Naive thymus-derived CD4-positive, alpha-beta T cell (primary cell): ENCODE measurements at regions of chr4 and their contacts with region 1.

Region 1: GRCh38 chr4:6673660-6674499 is 19.8 kb upstream of the S100P start:
- DNase-seq: peak; percentile 89 to 97 (median 95)
- ATAC-seq: peak; percentile 93
- H3K4me3 ChIP-seq: peak overlapping the region; percentile 74
- H3K4me3 Mint-ChIP-seq: peak overlapping the region; percentile 90 to 100 (median 98)
- H3K27ac ChIP-seq: peak overlapping the region; percentile 83
- H3K27ac Mint-ChIP-seq: peak overlapping the region; percentile 88 to 100 (median 98)
- H3K4me1 ChIP-seq: peaks cover 30 to 34% of the 10 kb centered on the region in 2 donors
- H3K4me1 Mint-ChIP-seq: peaks cover 33 to 53% (median 50%) of the 10 kb centered on the region in 7 donors
- H3K27me3 ChIP-seq: no peaks in the 10 kb centered on the region
- H3K27me3 Mint-ChIP-seq: peaks cover 0 to 3% (median 0%) of the 10 kb centered on the region in 5 donors

Region 2: GRCh38 chr4:4941741-4942140 is 1732.1 kb before region 1 on chr4:
- CTCF ChIA-PET with region 1: no interaction called
- POLR2A ChIA-PET with region 1: no interaction called
- intact Hi-C with region 1: no loop called
- DNase-seq: no peak
- ATAC-seq: no peak
- H3K4me3 ChIP-seq: no peak overlapping the region
- H3K4me3 Mint-ChIP-seq: no peak overlapping the region
- H3K27ac ChIP-seq: no peak overlapping the region
- H3K27ac Mint-ChIP-seq: no peak overlapping the region
- H3K4me1 ChIP-seq: peaks cover 8 to 9% of the 10 kb centered on the region in 2 donors
- H3K4me1 Mint-ChIP-seq: peaks cover 5 to 20% (median 19%) of the 10 kb centered on the region in 7 donors
- H3K27me3 ChIP-seq: no peaks in the 10 kb centered on the region
- H3K27me3 Mint-ChIP-seq: peaks cover 0 to 9% (median 0%) of the 10 kb centered on the region in 5 donors

Region 3: DNA sequence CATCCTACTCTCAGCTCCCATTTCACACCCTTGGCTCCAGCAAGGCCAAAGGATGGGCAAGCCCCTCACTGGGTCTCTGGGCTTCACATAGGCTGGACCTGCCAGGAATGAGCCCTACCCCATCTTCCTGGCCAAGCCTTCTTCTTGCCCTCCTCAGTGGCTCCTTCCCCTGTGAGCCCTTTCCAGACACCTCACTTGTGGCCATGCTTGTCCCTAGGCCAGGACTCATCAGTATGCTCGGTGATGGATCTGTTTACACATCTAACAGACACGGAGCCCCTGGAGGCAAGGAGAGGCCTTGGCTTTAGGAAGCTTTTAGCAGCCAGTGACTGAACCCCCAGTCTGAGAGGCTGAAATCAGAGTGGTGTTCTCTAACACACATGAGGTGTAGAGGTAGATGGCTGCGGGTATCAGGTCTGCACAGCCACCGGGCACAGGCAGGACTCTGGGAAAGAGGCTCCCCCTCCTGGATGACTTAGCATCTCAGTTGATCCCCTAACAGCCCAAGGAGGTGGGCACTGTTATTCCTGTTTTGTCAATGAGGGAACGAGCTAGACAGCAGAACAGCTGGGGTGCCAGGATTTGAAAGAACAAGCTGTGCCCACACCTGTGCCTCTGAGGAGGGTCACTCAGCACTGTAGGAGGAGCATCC is 246.3 kb before region 1 on chr4:
- CTCF ChIA-PET with region 1: no interaction called
- POLR2A ChIA-PET with region 1: no interaction called
- intact Hi-C with region 1: no loop called
- DNase-seq: no peak
- ATAC-seq: no peak
- H3K4me3 ChIP-seq: no peak overlapping the region
- H3K4me3 Mint-ChIP-seq: no peak overlapping the region
- H3K27ac ChIP-seq: no peak overlapping the region
- H3K27ac Mint-ChIP-seq: no peak overlapping the region
- H3K4me1 ChIP-seq: no peaks in the 10 kb centered on the region
- H3K4me1 Mint-ChIP-seq: no peaks in the 10 kb centered on the region
- H3K27me3 ChIP-seq: no peaks in the 10 kb centered on the region
- H3K27me3 Mint-ChIP-seq: peaks cover 0 to 27% (median 15%) of the 10 kb centered on the region in 5 donors

Region 4: DNA sequence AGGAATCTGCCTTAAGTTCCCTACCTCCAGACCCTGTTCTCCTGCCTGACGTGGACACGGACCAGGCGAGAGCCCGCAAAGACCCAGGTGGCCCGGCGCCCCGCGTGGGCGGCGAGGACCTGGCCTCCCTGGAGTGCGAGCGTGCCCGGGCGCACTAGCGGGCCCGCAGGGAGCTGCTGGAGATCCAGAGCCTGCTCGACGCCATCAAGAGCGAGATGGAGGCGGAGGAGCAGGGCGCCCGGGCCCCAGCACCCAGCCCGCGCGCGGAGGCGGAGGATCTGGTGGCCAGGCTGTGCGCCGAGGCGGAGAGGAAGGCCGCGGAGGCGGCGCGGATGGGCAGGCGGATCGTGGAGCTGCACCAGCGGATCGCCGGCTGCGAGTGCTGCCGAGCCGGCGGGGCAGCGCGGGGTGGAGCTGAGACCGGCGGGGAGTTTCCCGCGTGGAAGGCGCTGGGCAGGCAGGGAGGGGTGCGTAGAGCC is 15.2 kb before region 1 on chr4:
- CTCF ChIA-PET with region 1: interaction called, 15 read pairs
- POLR2A ChIA-PET with region 1: interaction called, 55 read pairs
- intact Hi-C with region 1: no loop called
- DNase-seq: peak; percentile 47 to 61 (median 55)
- ATAC-seq: peak; percentile 96
- H3K4me3 ChIP-seq: peak overlapping the region; percentile 51
- H3K4me3 Mint-ChIP-seq: peak overlapping the region; percentile 60 to 81 (median 76)
- H3K27ac ChIP-seq: peak overlapping the region; percentile 22
- H3K27ac Mint-ChIP-seq: peak overlapping the region in 6 of 9 donors; percentile 11 to 76 (median 44)
- H3K4me1 ChIP-seq: peaks cover 4 to 5% of the 10 kb centered on the region in 2 donors
- H3K4me1 Mint-ChIP-seq: peaks cover 0 to 15% (median 10%) of the 10 kb centered on the region in 7 donors
- H3K27me3 ChIP-seq: peaks cover 0 to 2% of the 10 kb centered on the region in 2 donors
- H3K27me3 Mint-ChIP-seq: peaks cover 0 to 43% (median 0%) of the 10 kb centered on the region in 5 donors

Region 5: DNA sequence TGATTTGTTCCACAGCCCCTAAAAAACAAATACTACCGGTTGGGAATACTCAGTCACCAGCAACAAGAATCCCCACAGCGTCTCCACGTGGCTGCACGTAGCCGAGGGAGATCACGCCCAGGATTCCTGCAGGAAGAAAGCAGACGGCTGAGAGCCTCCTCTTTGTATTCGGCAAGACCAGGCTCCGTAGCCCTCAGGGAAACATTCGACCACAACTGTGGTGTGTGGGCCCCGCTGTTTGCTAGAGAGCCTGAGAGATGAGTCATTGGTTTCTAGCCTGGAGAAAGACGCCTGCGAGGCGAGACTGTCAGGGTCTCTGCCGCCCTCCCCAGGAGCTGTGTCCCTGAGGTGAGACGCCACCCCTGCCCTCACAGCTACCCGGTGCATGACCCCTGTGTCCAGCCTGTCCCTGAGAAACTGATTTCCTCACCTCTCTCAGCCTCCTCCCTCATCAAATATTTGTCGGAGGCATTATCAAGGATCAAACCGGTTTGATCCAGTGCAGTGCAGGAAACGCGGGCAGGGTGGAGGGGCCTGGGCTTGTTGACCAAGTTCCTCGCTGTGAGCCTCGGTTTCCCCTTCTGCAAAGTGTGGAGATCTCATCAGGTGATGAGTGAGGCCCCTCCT is 15.1 kb after region 1 on chr4:
- CTCF ChIA-PET with region 1: interaction called, 61 read pairs
- POLR2A ChIA-PET with region 1: interaction called, 406 read pairs
- intact Hi-C with region 1: loop called (anchors 1 kb)
- DNase-seq: peak in 3 of 9 donors; percentile 18 to 79 (median 62)
- ATAC-seq: peak; percentile 79
- H3K4me3 ChIP-seq: peak overlapping the region; percentile 43
- H3K4me3 Mint-ChIP-seq: peak overlapping the region in 9 of 10 donors; percentile 16 to 92 (median 66)
- H3K27ac ChIP-seq: peak overlapping the region; percentile 61
- H3K27ac Mint-ChIP-seq: peak overlapping the region; percentile 93 to 99 (median 96)
- H3K4me1 ChIP-seq: peaks cover 53 to 66% of the 10 kb centered on the region in 2 donors
- H3K4me1 Mint-ChIP-seq: peaks cover 38 to 82% (median 64%) of the 10 kb centered on the region in 7 donors
- H3K27me3 ChIP-seq: no peaks in the 10 kb centered on the region
- H3K27me3 Mint-ChIP-seq: no peaks in the 10 kb centered on the region

Region 6: GRCh38 chr4:6701371-6701770 is 27.5 kb after region 1 on chr4:
- CTCF ChIA-PET with region 1: interaction called, 50 read pairs
- POLR2A ChIA-PET with region 1: interaction called, 696 read pairs
- intact Hi-C with region 1: loop called (anchors 1 kb)
- DNase-seq: peak in 1 of 9 donors; percentile 18
- ATAC-seq: no peak
- H3K4me3 ChIP-seq: no peak overlapping the region
- H3K4me3 Mint-ChIP-seq: no peak overlapping the region
- H3K27ac ChIP-seq: no peak overlapping the region
- H3K27ac Mint-ChIP-seq: peak overlapping the region in 1 of 9 donors; percentile 12
- H3K4me1 ChIP-seq: peaks cover 41 to 60% of the 10 kb centered on the region in 2 donors
- H3K4me1 Mint-ChIP-seq: peaks cover 38 to 73% (median 68%) of the 10 kb centered on the region in 7 donors
- H3K27me3 ChIP-seq: no peaks in the 10 kb centered on the region
- H3K27me3 Mint-ChIP-seq: no peaks in the 10 kb centered on the region

Region 7: DNA sequence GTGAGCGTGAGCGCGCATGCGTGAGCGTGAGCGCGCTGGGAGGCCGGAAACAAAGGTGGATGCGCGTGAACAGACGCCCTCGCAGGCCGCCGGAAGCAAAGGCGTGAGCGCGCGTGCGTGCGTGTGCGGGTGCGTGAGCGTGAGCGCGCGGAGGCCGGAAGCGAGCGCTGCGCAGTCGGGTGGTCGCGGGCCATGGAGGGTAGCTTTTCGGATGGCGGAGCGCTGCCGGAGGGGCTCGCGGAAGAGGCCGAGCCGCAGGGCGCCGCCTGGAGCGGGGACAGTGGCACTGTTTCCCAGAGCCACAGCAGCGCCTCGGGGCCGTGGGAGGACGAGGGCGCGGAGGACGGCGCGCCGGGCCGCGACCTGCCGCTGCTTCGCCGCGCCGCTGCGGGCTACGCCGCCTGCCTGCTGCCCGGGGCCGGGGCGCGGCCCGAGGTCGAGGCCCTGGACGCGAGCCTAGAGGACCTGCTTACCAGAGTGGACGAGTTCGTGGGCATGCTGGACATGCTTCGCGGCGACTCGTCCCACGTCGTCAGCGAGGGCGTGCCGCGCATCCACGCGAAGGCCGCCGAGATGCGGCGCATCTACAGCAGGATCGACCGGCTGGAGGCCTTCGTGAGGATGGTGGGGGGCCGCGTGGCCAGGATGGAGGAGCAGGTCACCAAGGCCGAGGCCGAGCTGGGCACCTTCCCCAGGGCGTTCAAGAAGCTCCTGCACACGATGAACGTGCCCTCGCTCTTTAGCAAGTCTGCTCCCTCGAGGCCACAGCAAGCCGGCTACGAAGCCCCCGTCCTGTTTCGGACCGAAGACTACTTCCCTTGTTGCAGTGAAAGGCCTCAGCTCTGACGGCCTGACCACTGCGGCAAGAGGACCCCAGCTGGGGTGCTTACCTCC is 42.4 kb after region 1 on chr4 and contains the start of gene BLOC1S4:
- CTCF ChIA-PET with region 1: interaction called, 61 read pairs
- POLR2A ChIA-PET with region 1: interaction called, 696 read pairs
- intact Hi-C with region 1: loop called (anchors 1 kb)
- DNase-seq: peak; percentile 86 to 95 (median 91)
- ATAC-seq: peak; percentile 92
- H3K4me3 ChIP-seq: peak within 1 kb of the TSS; percentile 86
- H3K4me3 Mint-ChIP-seq: peak within 1 kb of the TSS; percentile 89 to 99 (median 95)
- H3K27ac ChIP-seq: peak within 1 kb of the TSS; percentile 90
- H3K27ac Mint-ChIP-seq: peak within 1 kb of the TSS; percentile 94 to 100 (median 97)
- H3K4me1 ChIP-seq: peaks cover 19 to 20% of the 10 kb centered on the region in 2 donors
- H3K4me1 Mint-ChIP-seq: peaks cover 22 to 52% (median 36%) of the 10 kb centered on the region in 7 donors
- H3K27me3 ChIP-seq: no peaks in the 10 kb centered on the region
- H3K27me3 Mint-ChIP-seq: peaks cover 0 to 8% (median 0%) of the 10 kb centered on the region in 5 donors
- total RNA-seq, gene BLOC1S4: 18.7 to 45.9 (median 25.0) TPM

Region 8: DNA sequence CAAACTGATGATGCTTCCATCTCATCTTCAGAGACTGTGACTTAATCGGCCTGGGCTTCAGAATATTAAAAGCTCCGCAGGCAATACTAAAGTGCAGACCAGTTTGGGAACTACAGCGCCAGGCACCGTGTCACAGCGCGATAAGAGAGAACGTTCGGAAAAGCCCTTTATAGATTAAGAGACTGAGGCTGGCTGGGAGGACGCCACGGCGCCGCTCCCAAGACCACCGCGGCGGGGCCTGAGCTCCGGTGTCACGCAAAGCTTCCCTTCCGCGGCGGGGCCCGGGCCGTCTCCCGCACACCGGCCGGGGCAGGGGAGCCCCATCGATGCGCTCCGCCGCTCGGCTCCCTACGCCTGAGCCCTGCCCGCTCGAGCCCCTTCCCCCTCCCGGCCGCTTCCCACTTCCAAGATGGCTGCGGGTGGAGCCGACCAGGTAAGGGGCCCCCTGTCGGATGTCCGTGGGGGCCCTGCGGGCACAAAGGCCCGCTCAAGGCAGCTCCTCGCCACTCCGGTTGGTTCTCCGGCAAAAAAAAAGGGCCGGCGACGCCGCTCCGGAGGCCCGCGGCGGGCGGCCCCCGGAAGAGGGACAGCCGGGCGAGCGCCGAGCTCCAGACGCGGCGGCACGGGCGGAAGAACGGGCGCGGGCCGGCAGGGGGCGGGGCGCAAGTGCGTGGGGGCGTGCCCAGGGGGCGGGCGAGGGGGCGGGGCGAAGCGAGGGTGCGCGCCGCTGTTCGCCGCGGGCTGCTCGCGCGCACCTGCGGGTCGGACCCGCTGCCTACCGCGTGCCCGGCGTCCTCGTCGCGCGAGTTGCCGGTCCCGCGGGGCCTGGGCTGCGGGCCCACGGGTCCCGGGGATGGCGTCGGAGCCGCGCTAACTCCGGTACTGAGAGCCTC is 235.4 kb after region 1 on chr4 and contains the start of gene TBC1D14:
- CTCF ChIA-PET with region 1: no interaction called
- POLR2A ChIA-PET with region 1: interaction called, 4 read pairs
- intact Hi-C with region 1: loop called in 1 of 2 experiments (anchors 1 kb)
- DNase-seq: peak; percentile 84 to 93 (median 90)
- ATAC-seq: peak; percentile 94
- H3K4me3 ChIP-seq: peak within 1 kb of the TSS; percentile 70
- H3K4me3 Mint-ChIP-seq: peak within 1 kb of the TSS; percentile 89 to 95 (median 91)
- H3K27ac ChIP-seq: peak within 1 kb of the TSS; percentile 97
- H3K27ac Mint-ChIP-seq: peak within 1 kb of the TSS; percentile 81 to 94 (median 91)
- H3K4me1 ChIP-seq: peaks cover 20 to 38% of the 10 kb centered on the region in 2 donors
- H3K4me1 Mint-ChIP-seq: peaks cover 45 to 60% (median 55%) of the 10 kb centered on the region in 7 donors
- H3K27me3 ChIP-seq: no peaks in the 10 kb centered on the region
- H3K27me3 Mint-ChIP-seq: peaks cover 0 to 2% (median 0%) of the 10 kb centered on the region in 5 donors
- total RNA-seq, gene TBC1D14: 42.9 to 72.2 (median 58.3) TPM

Region 9: DNA sequence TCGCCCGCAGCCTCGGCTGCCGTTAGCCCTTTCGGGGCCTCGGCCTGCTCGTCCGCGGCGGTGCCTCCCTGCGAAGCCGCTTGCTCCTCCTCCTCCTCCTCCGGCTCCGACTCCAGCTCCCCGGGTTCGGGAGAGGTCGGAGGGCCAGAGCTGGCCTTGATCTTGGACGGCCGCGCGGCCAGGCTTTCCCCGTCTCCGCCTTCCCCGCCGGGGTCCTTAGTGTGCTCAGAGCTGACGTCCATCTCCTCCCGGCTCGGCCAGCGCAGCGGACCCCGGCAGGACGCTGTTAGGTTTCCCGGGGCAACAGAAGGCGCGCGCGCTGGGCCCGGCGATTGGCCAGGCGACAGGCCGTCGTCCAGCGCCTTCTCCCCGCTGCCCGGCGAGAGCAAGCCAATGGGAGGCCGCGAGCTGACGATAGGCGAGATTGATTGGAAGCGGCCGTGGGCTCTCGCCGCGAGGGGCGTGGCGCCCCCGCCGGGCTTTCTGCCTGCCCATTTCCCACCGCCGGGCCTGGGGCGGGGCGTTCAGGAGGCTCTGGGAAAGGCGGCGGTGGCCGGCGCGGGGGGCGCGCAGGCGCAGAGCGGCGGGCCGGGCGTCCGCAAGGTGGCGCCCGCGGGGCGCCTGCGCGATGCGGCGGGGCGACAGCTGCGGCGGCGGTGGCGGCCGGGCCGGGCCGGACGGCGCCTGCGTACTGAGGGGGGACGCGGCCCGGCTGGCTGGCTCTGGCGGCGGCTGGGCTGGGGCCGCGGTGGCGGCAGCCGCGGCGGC is 369.0 kb after region 1 on chr4 and contains the start of gene TADA2B:
- CTCF ChIA-PET with region 1: no interaction called
- POLR2A ChIA-PET with region 1: interaction called, 5 read pairs
- intact Hi-C with region 1: loop called in 1 of 2 experiments (anchors 1 kb)
- DNase-seq: peak; percentile 79 to 99 (median 88)
- ATAC-seq: peak; percentile 89
- H3K4me3 ChIP-seq: peak within 1 kb of the TSS; percentile 84
- H3K4me3 Mint-ChIP-seq: peak within 1 kb of the TSS; percentile 90 to 95 (median 92)
- H3K27ac ChIP-seq: peak within 1 kb of the TSS; percentile 85
- H3K27ac Mint-ChIP-seq: peak within 1 kb of the TSS; percentile 80 to 92 (median 89)
- H3K4me1 ChIP-seq: peaks cover 33 to 40% of the 10 kb centered on the region in 2 donors
- H3K4me1 Mint-ChIP-seq: peaks cover 38 to 58% (median 52%) of the 10 kb centered on the region in 7 donors
- H3K27me3 ChIP-seq: no peaks in the 10 kb centered on the region
- H3K27me3 Mint-ChIP-seq: peaks cover 0 to 15% (median 0%) of the 10 kb centered on the region in 5 donors
- total RNA-seq, gene TADA2B: 26.8 to 49.0 (median 41.5) TPM

Region 10: GRCh38 chr4:7792616-7793015 is 1118.7 kb after region 1 on chr4:
- CTCF ChIA-PET with region 1: no interaction called
- POLR2A ChIA-PET with region 1: no interaction called
- intact Hi-C with region 1: no loop called
- DNase-seq: no peak
- ATAC-seq: no peak
- H3K4me3 ChIP-seq: no peak overlapping the region
- H3K4me3 Mint-ChIP-seq: no peak overlapping the region
- H3K27ac ChIP-seq: no peak overlapping the region
- H3K27ac Mint-ChIP-seq: peak overlapping the region in 1 of 9 donors; percentile 12
- H3K4me1 ChIP-seq: no peaks in the 10 kb centered on the region
- H3K4me1 Mint-ChIP-seq: no peaks in the 10 kb centered on the region
- H3K27me3 ChIP-seq: no peaks in the 10 kb centered on the region
- H3K27me3 Mint-ChIP-seq: no peaks in the 10 kb centered on the region

Region 11: DNA sequence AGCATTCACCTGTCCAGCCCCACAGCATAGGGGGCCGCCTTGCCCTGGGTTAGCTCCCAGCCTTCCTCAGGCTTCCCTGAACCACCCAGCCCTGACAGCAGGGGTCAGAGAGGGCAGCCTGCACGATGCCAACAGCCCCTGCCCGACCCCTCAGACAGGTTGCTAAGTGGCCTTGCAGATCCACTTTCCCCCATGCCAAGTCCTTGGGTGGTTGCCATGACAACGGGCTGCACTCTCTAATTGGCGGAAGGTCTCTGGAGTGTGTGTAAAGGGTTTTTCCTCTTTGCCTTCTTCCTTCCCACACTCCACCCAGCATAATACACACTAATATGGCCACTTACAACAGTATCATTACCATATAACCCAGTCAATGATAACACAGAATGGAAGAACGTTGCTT is 1365.4 kb after region 1 on chr4:
- CTCF ChIA-PET with region 1: no interaction called
- POLR2A ChIA-PET with region 1: no interaction called
- intact Hi-C with region 1: no loop called
- DNase-seq: no peak
- ATAC-seq: no peak
- H3K4me3 ChIP-seq: no peak overlapping the region
- H3K4me3 Mint-ChIP-seq: no peak overlapping the region
- H3K27ac ChIP-seq: no peak overlapping the region
- H3K27ac Mint-ChIP-seq: no peak overlapping the region
- H3K4me1 ChIP-seq: peaks cover 6 to 10% of the 10 kb centered on the region in 2 donors
- H3K4me1 Mint-ChIP-seq: peaks cover 5 to 11% (median 10%) of the 10 kb centered on the region in 7 donors
- H3K27me3 ChIP-seq: no peaks in the 10 kb centered on the region
- H3K27me3 Mint-ChIP-seq: peaks cover 0 to 16% (median 12%) of the 10 kb centered on the region in 5 donors